Activated CD4-positive, alpha-beta memory T cell treated with anti-CD3 and anti-CD28 coated beads for 36 hours (primary cell): ENCODE measurements at regions of chr1 and their contacts with region 1.

Region 1: GRCh38 chr1:185156854-185157598 is at the starts of genes SWT1 and TRMT1L:
- DNase-seq: peak; percentile 99
- H3K4me3 Mint-ChIP-seq: peak within 1 kb of the TSS; percentile 86
- H3K27ac Mint-ChIP-seq: peak within 1 kb of the TSS; percentile 90
- H3K4me1 Mint-ChIP-seq: peaks cover 53% of the 10 kb centered on the region
- H3K27me3 Mint-ChIP-seq: no peaks in the 10 kb centered on the region
- total RNA-seq, gene SWT1: 2.3 to 3.0 TPM
- total RNA-seq, gene TRMT1L: 28.6 to 34.4 TPM

Region 2: DNA sequence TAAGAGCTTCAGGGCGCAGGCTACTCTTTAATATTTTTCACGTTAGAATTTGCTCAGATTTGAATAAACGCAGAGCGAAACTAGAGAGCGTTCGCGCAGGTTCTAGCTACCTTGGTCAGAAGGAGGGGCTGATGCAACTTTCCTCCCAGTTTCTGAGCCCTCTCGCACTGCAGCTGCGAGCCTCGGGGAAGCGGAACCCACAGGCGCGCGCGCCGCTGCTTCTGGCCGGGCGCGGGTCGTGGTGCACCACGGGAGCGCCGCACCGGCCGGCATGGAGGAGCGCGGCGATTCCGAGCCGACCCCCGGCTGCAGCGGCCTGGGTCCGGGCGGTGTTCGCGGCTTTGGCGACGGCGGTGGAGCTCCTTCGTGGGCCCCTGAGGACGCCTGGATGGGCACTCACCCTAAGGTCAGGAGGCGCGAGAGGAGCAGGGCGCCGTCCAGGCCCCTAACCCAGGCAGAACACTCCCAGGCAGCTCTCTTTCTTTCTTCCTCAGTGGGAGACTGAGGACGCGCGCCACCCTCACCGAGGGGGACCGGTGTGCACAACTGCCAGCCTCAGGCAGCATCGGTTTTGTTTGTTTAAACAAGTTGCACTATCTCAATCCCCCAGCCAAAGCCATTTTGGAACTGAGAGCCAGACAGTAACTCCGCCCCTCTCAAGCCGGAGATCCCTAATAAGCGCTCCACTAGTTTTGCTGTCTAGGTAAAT is 1105.4 kb before region 1 on chr1 and contains the start of gene TSEN15:
- CTCF ChIA-PET with region 1: no interaction called
- POLR2A ChIA-PET with region 1: no interaction called
- intact Hi-C with region 1: loop called (anchors 5 kb)
- DNase-seq: peak; percentile 85
- H3K4me3 Mint-ChIP-seq: peak within 1 kb of the TSS; percentile 98
- H3K27ac Mint-ChIP-seq: peak within 1 kb of the TSS; percentile 96
- H3K4me1 Mint-ChIP-seq: peaks cover 33% of the 10 kb centered on the region
- H3K27me3 Mint-ChIP-seq: peaks cover 6% of the 10 kb centered on the region
- total RNA-seq, gene TSEN15: 44.1 to 44.3 TPM

Region 3: GRCh38 chr1:184973272-184974055 is 183.6 kb before region 1 on chr1:
- CTCF ChIA-PET with region 1: no interaction called
- POLR2A ChIA-PET with region 1: no interaction called
- intact Hi-C with region 1: loop called (anchors 1 kb)
- DNase-seq: peak; percentile 86
- H3K4me3 Mint-ChIP-seq: peak overlapping the region; percentile 94
- H3K27ac Mint-ChIP-seq: peak overlapping the region; percentile 96
- H3K4me1 Mint-ChIP-seq: peaks cover 53% of the 10 kb centered on the region
- H3K27me3 Mint-ChIP-seq: peaks cover 6% of the 10 kb centered on the region

Region 4: GRCh38 chr1:185170291-185170848 is 13.3 kb after region 1 on chr1:
- CTCF ChIA-PET with region 1: interaction called, 36 read pairs
- POLR2A ChIA-PET with region 1: interaction called, 3 read pairs
- intact Hi-C with region 1: loop called (anchors 1 kb)
- DNase-seq: peak; percentile 33
- H3K4me3 Mint-ChIP-seq: no peak overlapping the region
- H3K27ac Mint-ChIP-seq: no peak overlapping the region
- H3K4me1 Mint-ChIP-seq: peaks cover 5% of the 10 kb centered on the region
- H3K27me3 Mint-ChIP-seq: no peaks in the 10 kb centered on the region

Region 5: DNA sequence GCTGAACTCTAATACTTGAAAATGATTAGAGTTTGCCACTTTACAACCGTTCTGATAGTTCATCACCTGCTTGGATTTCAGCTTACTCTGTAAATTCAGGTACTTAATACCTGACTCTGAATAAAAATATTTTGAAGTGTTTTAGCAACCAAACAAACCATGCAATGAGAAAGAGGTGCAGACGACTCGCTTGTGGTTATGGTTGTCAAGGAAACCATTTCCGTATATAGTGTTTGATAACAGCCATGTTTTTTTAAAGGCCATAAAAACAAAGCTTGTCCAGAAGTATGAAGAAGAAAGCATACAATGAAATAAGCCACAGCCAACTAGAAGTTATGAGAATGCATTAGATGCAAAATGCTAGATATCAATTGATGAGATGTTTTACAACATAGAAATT is 410.0 kb after region 1 on chr1:
- CTCF ChIA-PET with region 1: no interaction called
- POLR2A ChIA-PET with region 1: no interaction called
- intact Hi-C with region 1: loop called (anchors 2 kb)
- DNase-seq: peak; percentile 57
- H3K4me3 Mint-ChIP-seq: no peak overlapping the region
- H3K27ac Mint-ChIP-seq: peak overlapping the region; percentile 74
- H3K4me1 Mint-ChIP-seq: peaks cover 62% of the 10 kb centered on the region
- H3K27me3 Mint-ChIP-seq: no peaks in the 10 kb centered on the region

Region 6: GRCh38 chr1:185670187-185670627 is 513.2 kb after region 1 on chr1:
- CTCF ChIA-PET with region 1: no interaction called
- POLR2A ChIA-PET with region 1: no interaction called
- intact Hi-C with region 1: loop called (anchors 5 kb)
- DNase-seq: peak; percentile 57
- H3K4me3 Mint-ChIP-seq: no peak overlapping the region
- H3K27ac Mint-ChIP-seq: no peak overlapping the region
- H3K4me1 Mint-ChIP-seq: peaks cover 15% of the 10 kb centered on the region
- H3K27me3 Mint-ChIP-seq: no peaks in the 10 kb centered on the region